Left cardiac atrium (tissue), 4 donors: ENCODE measurements at regions of chr9 and their contacts with region 1.

Region 1: DNA sequence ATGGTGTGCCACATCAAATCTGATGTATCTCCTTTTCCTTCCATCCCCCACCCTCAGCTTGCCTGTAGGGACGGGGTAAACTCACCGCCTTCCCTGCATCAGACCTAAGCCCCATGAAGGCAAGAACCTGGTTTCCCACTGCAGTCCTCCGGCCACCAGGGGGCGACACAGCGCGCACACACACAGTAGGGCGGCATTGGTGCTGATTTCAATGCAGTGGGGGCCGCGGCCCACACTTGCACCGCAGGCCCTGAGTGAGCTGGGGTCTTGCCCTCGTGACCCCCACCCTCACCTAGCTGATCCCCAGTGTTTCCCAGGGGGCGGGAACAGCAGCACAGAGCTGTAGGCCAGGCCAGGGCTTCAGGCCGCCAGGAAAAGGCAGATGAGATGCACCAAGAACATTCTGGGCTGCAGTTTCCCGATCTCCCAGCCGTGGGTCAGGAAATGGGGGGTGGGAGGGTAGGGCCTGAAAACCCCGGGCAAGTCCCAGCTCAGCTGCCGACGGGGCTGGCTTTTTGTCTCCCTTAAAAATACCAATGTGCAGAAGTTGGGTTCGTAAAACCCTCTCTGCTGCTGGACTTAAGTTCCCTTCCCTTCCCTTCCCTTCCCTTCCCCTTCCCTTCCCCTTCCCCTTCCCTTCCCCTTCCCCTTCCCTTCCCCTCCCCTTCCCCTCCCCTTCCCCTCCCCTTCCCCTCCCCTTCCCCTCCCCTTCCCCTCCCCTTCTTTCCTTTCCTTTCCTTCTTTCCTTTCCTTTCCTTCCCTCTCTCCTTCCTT is 19.5 kb downstream of the FAM163B start:
- DNase-seq: no peak
- ATAC-seq: no peak

Region 2: GRCh38 chr9:133532937-133533668 is 56.5 kb before region 1 on chr9:
- intact Hi-C with region 1: loop called in 1 of 2 experiments (anchors 5 kb)
- DNase-seq: peak; percentile 79
- ATAC-seq: peak; percentile 36 to 45

Region 3: GRCh38 chr9:133726401-133727276 is 137.0 kb after region 1 on chr9:
- intact Hi-C with region 1: loop called in 1 of 2 experiments (anchors 5 kb)
- DNase-seq: peak; percentile 58
- ATAC-seq: peak; percentile 70 to 72

Region 4: DNA sequence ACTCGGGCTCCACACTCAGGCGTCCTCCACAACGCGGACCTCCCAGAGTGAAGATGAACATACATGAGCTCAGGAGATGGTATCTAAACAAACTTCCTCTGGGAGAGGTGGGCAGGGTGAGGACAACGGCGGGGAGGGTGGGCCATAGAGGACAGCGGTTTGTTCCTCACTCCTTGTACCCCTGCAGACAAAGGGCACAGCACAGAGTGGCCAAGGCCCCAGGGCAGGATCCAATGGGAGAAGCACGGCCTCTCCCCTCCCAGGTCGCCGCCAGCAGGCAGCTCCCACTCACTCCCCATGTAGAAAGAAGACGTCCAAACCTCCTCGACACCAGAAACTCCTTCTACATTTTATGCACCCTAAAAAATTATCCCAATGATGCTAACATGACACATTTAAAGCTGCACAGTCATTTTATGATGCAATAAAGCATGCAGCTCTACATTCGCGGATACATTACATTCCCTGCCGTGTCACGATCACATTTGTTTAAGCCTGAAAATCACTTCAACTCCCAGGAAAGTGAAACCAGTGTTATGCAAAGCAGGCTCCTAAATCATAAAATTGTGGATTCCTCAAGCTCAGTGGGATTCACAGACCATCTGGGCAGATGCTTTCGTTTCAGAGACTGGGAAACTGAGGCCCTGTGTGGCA is 236.0 kb after region 1 on chr9:
- intact Hi-C with region 1: no loop called
- DNase-seq: no peak
- ATAC-seq: no peak